ENCODE measurements at regions of chr7 and their contacts with region 1.

Region 1: DNA sequence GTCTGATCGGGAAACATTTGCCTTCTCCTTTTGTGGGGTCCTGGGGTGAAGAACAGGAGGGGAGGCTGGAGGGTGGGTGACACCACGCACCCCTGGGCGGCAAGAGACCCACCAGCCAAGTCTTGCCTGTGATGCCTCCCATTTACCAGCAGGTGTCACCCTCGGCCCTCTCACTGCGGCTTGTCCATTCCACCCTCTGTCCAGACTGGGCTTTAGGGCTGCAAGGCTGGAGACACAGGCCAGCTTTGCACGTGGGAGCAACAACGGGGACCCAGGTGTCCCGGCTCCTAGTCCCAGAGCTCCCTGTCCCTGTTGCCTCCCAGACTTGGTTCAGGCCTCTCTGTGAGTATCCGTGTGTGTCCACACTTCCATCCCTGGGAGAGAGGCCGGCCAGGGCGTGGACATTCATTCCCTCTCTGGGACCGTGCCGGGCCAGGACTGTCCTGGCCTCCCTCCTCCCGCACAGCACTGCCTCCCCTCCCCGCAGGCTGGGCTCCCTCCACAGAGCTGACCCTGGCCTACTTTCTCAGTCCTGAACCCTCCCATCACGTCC is 36.2 kb upstream of the GTF2IRD1 start:
- DNase-seq: peak; percentile 34 to 88 (median 71)
- ATAC-seq: peak; percentile 85 to 100 (median 98)
- H3K4me3 ChIP-seq: no peak overlapping the region
- H3K27ac ChIP-seq: no peak overlapping the region
- H3K4me1 ChIP-seq: no peaks in the 10 kb centered on the region
- H3K27me3 ChIP-seq: no peaks in the 10 kb centered on the region
- CTCF ChIP-seq: peak; percentile 85 to 94 (median 88)

Region 2: DNA sequence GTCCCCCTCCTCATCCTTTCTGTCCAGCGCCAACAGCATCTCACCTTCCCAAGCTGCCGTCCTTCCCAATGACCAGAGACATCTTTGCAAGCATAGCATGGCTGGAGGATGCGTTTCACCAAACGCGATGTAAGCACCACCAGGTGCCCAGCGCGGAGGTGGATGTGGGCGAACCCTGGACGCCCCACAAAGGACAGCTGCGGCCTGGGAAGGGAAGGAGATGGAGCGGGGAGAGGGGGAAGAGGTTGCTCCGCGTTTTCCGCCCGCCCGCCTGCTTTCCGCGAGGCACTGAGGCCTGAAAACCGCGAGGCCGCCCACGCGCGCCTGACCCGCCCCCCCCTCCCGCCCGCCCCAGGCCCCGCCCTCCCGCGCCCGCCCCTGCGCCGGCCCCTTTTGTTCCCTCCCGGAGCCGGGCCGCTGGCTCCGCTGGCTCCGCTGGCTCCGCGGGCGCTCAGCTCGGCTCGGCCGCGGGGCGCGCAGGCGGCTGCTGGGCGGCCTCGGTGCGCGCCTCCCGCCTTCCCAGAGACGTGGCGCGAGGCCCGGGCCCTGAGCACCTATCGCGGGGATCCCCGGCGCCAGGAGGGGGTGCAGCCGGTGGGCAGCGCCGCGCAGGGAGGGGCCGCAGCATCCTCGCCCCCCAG is 128.4 kb before region 1 on chr7 and contains the start of gene CLIP2:
- intact Hi-C with region 1: no loop called
- DNase-seq: peak; percentile 80 to 92 (median 85)
- ATAC-seq: peak; percentile 69 to 84 (median 80)
- H3K4me3 ChIP-seq: peak within 1 kb of the TSS; percentile 55 to 82 (median 80)
- H3K27ac ChIP-seq: peak within 1 kb of the TSS; percentile 31 to 82 (median 70)
- H3K4me1 ChIP-seq: peaks cover 15 to 37% (median 15%) of the 10 kb centered on the region in 3 donors
- H3K27me3 ChIP-seq: no peaks in the 10 kb centered on the region
- CTCF ChIP-seq: no peak
- total RNA-seq, gene CLIP2: 14.7 to 29.8 (median 20.8) TPM

Region 3: DNA sequence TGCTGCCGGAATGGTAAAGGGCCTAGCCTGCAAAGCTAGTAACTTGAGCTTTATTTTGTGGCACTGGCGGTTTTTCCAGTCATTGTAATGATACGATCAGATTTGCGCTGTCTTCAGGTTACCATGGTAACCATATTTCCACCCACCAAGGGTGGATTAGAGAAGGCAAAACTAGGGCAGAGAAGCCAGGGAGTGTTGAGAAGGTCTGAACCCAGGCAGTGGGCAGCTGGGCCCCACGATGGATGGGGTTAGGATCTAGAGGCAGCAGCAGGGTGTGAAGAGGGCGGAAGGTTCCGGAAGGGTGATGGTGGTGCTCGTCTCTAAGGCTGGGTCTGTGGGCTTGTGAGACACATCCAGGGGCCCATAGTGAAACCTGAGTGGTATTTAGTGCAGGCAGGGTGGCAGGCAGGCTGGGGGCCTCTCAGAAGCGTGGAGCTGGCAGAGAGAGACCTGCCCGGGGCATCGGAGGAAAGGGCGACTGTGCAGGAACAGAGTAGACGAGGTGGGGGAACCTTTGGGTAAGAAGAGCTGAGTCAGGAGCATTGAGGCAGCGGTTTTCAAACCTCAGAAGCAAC is 152.1 kb after region 1 on chr7:
- intact Hi-C with region 1: loop called in 1 of 3 experiments (anchors 10 kb)
- DNase-seq: no peak
- ATAC-seq: peak in 1 of 4 donors; percentile 8
- H3K4me3 ChIP-seq: no peak overlapping the region
- H3K27ac ChIP-seq: no peak overlapping the region
- H3K4me1 ChIP-seq: no peaks in the 10 kb centered on the region
- H3K27me3 ChIP-seq: no peaks in the 10 kb centered on the region
- CTCF ChIP-seq: no peak